Caco-2 (cell line): ENCODE measurements at regions of chr2 and their contacts with region 1.

Region 1: GRCh38 chr2:148989882-148990493 is 48.5 kb upstream of the LYPD6B start:
- DNase-seq: peak; percentile 73 to 75
- H3K4me3 ChIP-seq: no peak overlapping the region
- H3K4me3 Mint-ChIP-seq: no peak overlapping the region
- H3K27ac Mint-ChIP-seq: no peak overlapping the region
- H3K4me1 ChIP-seq: no peaks in the 10 kb centered on the region
- H3K4me1 Mint-ChIP-seq: peaks cover 12% of the 10 kb centered on the region
- H3K27me3 ChIP-seq: 0 out of 2 replicates have a peak, but pooled peaks cover 1% of the 10 kb centered on the region
- H3K27me3 Mint-ChIP-seq: peaks cover 2% of the 10 kb centered on the region
- CTCF ChIP-seq: peak; percentile 71 to 90

Region 2: GRCh38 chr2:147937744-147938349 is 1052.1 kb before region 1 on chr2:
- CTCF ChIA-PET with region 1: no interaction called
- POLR2A ChIA-PET with region 1: no interaction called
- intact Hi-C with region 1: loop called (anchors 1 kb)
- DNase-seq: peak in 1 of 2 experiments; percentile 20
- H3K4me3 ChIP-seq: no peak overlapping the region
- H3K4me3 Mint-ChIP-seq: no peak overlapping the region
- H3K27ac Mint-ChIP-seq: no peak overlapping the region
- H3K4me1 ChIP-seq: no peaks in the 10 kb centered on the region
- H3K4me1 Mint-ChIP-seq: no peaks in the 10 kb centered on the region
- H3K27me3 ChIP-seq: no peaks in the 10 kb centered on the region
- H3K27me3 Mint-ChIP-seq: no peaks in the 10 kb centered on the region
- CTCF ChIP-seq: peak; percentile 75 to 82

Region 3: GRCh38 chr2:147989809-147990403 is 1000.1 kb before region 1 on chr2:
- CTCF ChIA-PET with region 1: interaction called, 3 read pairs
- POLR2A ChIA-PET with region 1: no interaction called
- intact Hi-C with region 1: loop called (anchors 1 kb)
- DNase-seq: peak in 1 of 2 experiments; percentile 24
- H3K4me3 ChIP-seq: no peak overlapping the region
- H3K4me3 Mint-ChIP-seq: no peak overlapping the region
- H3K27ac Mint-ChIP-seq: no peak overlapping the region
- H3K4me1 ChIP-seq: 0 out of 2 replicates have a peak, but pooled peaks cover 9% of the 10 kb centered on the region
- H3K4me1 Mint-ChIP-seq: no peaks in the 10 kb centered on the region
- H3K27me3 ChIP-seq: no peaks in the 10 kb centered on the region
- H3K27me3 Mint-ChIP-seq: no peaks in the 10 kb centered on the region
- CTCF ChIP-seq: peak; percentile 46 to 58

Region 4: GRCh38 chr2:148565272-148565894 is 424.6 kb before region 1 on chr2:
- CTCF ChIA-PET with region 1: no interaction called
- POLR2A ChIA-PET with region 1: no interaction called
- intact Hi-C with region 1: loop called (anchors 1 kb)
- DNase-seq: peak in 1 of 2 experiments; percentile 26
- H3K4me3 ChIP-seq: no peak overlapping the region
- H3K4me3 Mint-ChIP-seq: no peak overlapping the region
- H3K27ac Mint-ChIP-seq: no peak overlapping the region
- H3K4me1 ChIP-seq: no peaks in the 10 kb centered on the region
- H3K4me1 Mint-ChIP-seq: no peaks in the 10 kb centered on the region
- H3K27me3 ChIP-seq: no peaks in the 10 kb centered on the region
- H3K27me3 Mint-ChIP-seq: peaks cover 11% of the 10 kb centered on the region
- CTCF ChIP-seq: peak in 1 of 2 experiments; percentile 43

Region 5: GRCh38 chr2:148926291-148926961 is 63.6 kb before region 1 on chr2:
- CTCF ChIA-PET with region 1: interaction called, 3 read pairs
- POLR2A ChIA-PET with region 1: no interaction called
- intact Hi-C with region 1: loop called (anchors 1 kb)
- DNase-seq: peak in 1 of 2 experiments; percentile 53
- H3K4me3 ChIP-seq: no peak overlapping the region
- H3K4me3 Mint-ChIP-seq: peak overlapping the region; percentile 25
- H3K27ac Mint-ChIP-seq: no peak overlapping the region
- H3K4me1 ChIP-seq: no peaks in the 10 kb centered on the region
- H3K4me1 Mint-ChIP-seq: peaks cover 6% of the 10 kb centered on the region
- H3K27me3 ChIP-seq: no peaks in the 10 kb centered on the region
- H3K27me3 Mint-ChIP-seq: no peaks in the 10 kb centered on the region
- CTCF ChIP-seq: peak; percentile 72 to 78

Region 6: GRCh38 chr2:149064856-149065630 is 75.1 kb after region 1 on chr2:
- CTCF ChIA-PET with region 1: no interaction called
- POLR2A ChIA-PET with region 1: no interaction called
- intact Hi-C with region 1: no loop called
- DNase-seq: no peak
- H3K4me3 ChIP-seq: no peak overlapping the region
- H3K4me3 Mint-ChIP-seq: no peak overlapping the region
- H3K27ac Mint-ChIP-seq: peak overlapping the region; percentile 65
- H3K4me1 ChIP-seq: peaks cover 29% of the 10 kb centered on the region
- H3K4me1 Mint-ChIP-seq: peaks cover 26% of the 10 kb centered on the region
- H3K27me3 ChIP-seq: no peaks in the 10 kb centered on the region
- H3K27me3 Mint-ChIP-seq: no peaks in the 10 kb centered on the region
- CTCF ChIP-seq: no peak